HepG2 (cell line): ENCODE measurements at regions of chr3 and their contacts with region 1.

Region 1: DNA sequence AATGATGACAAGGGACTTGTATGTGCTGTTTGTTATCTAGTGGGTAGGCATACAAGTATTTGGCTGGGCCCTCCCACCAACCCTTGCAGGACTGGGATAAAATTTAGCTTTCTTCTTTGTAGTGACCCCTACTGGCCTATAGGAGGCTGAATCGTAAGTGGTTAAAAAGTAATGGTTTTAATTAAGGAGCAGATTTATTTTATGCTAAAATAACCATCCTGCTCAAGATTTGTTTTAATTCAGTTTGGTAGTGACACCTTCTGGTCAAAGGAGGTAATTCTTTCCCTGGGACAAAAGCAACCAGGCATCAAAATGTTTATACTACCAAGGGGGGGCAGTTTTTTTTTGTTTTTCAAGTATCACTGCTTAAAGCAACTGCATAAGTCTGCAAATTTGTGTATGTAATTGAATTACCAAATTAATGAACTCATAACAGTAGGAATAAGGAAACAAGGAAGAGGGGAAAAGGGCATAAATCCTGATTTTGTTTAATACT is 70.7 kb downstream of the TOP2B start:
- DNase-seq: peak; percentile 30
- ATAC-seq: peak; percentile 18; the same call in 2 of the 3 replicates
- H3K4me3 ChIP-seq: no peak overlapping the region
- H3K27ac ChIP-seq: no peak overlapping the region
- H3K4me1 ChIP-seq: peaks cover 19% of the 10 kb centered on the region
- H3K27me3 ChIP-seq: no peaks in the 10 kb centered on the region
- CTCF ChIP-seq: peak; percentile 46
- EP300 ChIP-seq: no peak
- POLR2A ChIP-seq: no peak
- RAD21 ChIP-seq: 0 out of 2 replicates have a peak, but pooled peaks have one; percentile 30

Region 2: GRCh38 chr3:24773798-24774197 is 820.3 kb before region 1 on chr3:
- CTCF ChIA-PET with region 1: interaction called, 4 read pairs
- POLR2A ChIA-PET with region 1: no interaction called
- in situ Hi-C with region 1: loop called (anchors 10 kb)
- intact Hi-C with region 1: loop called (anchors 1 kb)
- DNase-seq: peak; percentile 49
- ATAC-seq: peak; percentile 95
- H3K4me3 ChIP-seq: no peak overlapping the region
- H3K27ac ChIP-seq: no peak overlapping the region
- H3K4me1 ChIP-seq: no peaks in the 10 kb centered on the region
- H3K27me3 ChIP-seq: no peaks in the 10 kb centered on the region
- CTCF ChIP-seq: peak; percentile 79
- EP300 ChIP-seq: no peak
- POLR2A ChIP-seq: no peak
- RAD21 ChIP-seq: no peak

Region 3: DNA sequence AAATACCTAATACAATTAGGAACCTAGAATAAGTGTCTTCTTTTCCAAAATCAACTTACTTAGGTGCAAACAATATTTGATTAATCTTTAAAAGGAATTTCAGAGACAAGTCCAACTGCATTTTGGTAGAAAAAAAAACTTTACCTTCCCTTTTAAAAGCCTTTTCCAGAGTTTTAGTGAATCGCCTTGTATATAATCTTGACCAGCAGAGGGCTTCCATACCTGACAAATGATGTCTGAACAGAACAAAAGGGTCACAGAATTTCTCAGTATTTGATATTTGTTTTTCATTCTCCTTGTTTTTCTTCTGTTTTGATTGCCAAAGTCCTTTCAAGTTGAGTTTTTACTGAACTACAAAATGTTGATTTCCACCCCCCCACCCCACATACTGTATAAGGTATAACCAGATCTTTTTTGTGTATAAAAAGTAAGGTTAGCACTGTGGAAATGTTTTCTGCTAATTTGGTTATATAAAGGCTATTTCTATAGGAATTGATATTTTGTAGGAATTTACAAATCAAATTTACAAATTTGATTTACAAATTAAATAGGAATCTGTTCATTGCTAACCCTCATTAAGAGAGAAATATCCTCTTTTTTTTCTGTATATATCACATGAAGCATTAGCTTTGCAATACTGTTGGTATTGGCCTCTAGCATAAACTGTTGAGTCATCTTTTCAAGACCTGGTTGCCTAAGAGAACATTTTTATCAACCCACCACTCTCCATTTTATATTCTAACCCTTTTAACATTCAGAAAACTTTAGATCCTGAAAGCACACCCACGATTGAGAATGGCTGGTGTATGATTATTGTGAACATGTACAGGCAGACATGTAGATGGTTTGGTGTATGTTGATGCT is 630.1 kb before region 1 on chr3:
- CTCF ChIA-PET with region 1: interaction called, 4 read pairs
- POLR2A ChIA-PET with region 1: no interaction called
- in situ Hi-C with region 1: loop called (anchors 10 kb)
- intact Hi-C with region 1: loop called (anchors 1 kb)
- DNase-seq: peak; percentile 15
- ATAC-seq: peak; percentile 63
- H3K4me3 ChIP-seq: no peak overlapping the region
- H3K27ac ChIP-seq: no peak overlapping the region
- H3K4me1 ChIP-seq: no peaks in the 10 kb centered on the region
- H3K27me3 ChIP-seq: 0 out of 5 replicates have a peak, but pooled peaks cover 0 to 3% of the 10 kb centered on the region in 2 experiments
- CTCF ChIP-seq: peak; percentile 35; the same call in 1 of the 2 replicates
- EP300 ChIP-seq: no peak
- POLR2A ChIP-seq: no peak
- RAD21 ChIP-seq: no peak

Region 4: DNA sequence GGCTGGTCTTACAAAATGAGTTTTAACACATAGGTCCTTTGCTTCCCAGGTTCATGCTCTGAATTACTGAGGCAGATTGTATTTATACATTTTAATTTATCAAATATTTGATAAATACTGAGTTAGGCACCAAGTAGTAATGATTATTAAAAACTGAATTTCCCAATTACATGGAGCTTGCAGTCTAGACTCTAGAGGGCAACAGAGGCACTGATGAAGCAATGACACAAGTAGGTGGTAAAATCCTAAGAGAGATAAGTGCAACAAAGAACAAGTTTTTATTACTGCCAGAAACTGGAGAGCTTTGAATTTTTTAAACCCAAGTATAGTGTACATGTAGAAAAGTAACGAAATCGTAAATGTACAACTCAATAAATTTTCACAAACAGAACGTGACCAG is 572.2 kb before region 1 on chr3:
- CTCF ChIA-PET with region 1: no interaction called
- POLR2A ChIA-PET with region 1: no interaction called
- in situ Hi-C with region 1: no loop called
- intact Hi-C with region 1: loop called (anchors 2 kb)
- DNase-seq: peak; percentile 3
- ATAC-seq: peak; percentile 38; the same call in 1 of the 3 replicates
- H3K4me3 ChIP-seq: no peak overlapping the region
- H3K27ac ChIP-seq: no peak overlapping the region
- H3K4me1 ChIP-seq: no peaks in the 10 kb centered on the region
- H3K27me3 ChIP-seq: peaks cover 0 to 2% of the 10 kb centered on the region in 2 experiments; a peak in 2 of 5 replicates
- CTCF ChIP-seq: no peak
- EP300 ChIP-seq: no peak
- POLR2A ChIP-seq: no peak
- RAD21 ChIP-seq: no peak

Region 5: GRCh38 chr3:25433868-25434267 is 160.2 kb before region 1 on chr3:
- CTCF ChIA-PET with region 1: no interaction called
- POLR2A ChIA-PET with region 1: no interaction called
- in situ Hi-C with region 1: loop called (anchors 10 kb)
- intact Hi-C with region 1: loop called (anchors 10 kb)
- DNase-seq: no peak
- ATAC-seq: no peak
- H3K4me3 ChIP-seq: no peak overlapping the region
- H3K27ac ChIP-seq: no peak overlapping the region
- H3K4me1 ChIP-seq: peaks cover 24% of the 10 kb centered on the region
- H3K27me3 ChIP-seq: peaks cover 0 to 12% of the 10 kb centered on the region in 2 experiments; a peak in 3 of 5 replicates
- CTCF ChIP-seq: no peak
- EP300 ChIP-seq: no peak
- POLR2A ChIP-seq: no peak
- RAD21 ChIP-seq: no peak

Region 6: GRCh38 chr3:25532431-25533162 is 61.5 kb before region 1 on chr3:
- CTCF ChIA-PET with region 1: interaction called, 14 read pairs
- POLR2A ChIA-PET with region 1: no interaction called
- in situ Hi-C with region 1: no loop called
- intact Hi-C with region 1: loop called (anchors 1 kb)
- DNase-seq: peak; percentile 15
- ATAC-seq: no peak
- H3K4me3 ChIP-seq: no peak overlapping the region
- H3K27ac ChIP-seq: no peak overlapping the region
- H3K4me1 ChIP-seq: peaks cover 16% of the 10 kb centered on the region
- H3K27me3 ChIP-seq: no peaks in the 10 kb centered on the region
- CTCF ChIP-seq: peak; percentile 61
- EP300 ChIP-seq: no peak
- POLR2A ChIP-seq: no peak
- RAD21 ChIP-seq: no peak